Activated CD4-positive, alpha-beta memory T cell treated with anti-CD3 and anti-CD28 coated beads for 36 hours (primary cell): ENCODE measurements at regions of chr2 and their contacts with region 1.

Region 1: GRCh38 chr2:134918526-134919340 is at the start of gene CCNT2:
- DNase-seq: peak; percentile 100
- H3K4me3 Mint-ChIP-seq: peak within 1 kb of the TSS; percentile 90
- H3K27ac Mint-ChIP-seq: peak within 1 kb of the TSS; percentile 97
- H3K4me1 Mint-ChIP-seq: peaks cover 35% of the 10 kb centered on the region
- H3K27me3 Mint-ChIP-seq: peaks cover 5% of the 10 kb centered on the region
- total RNA-seq, gene CCNT2: 25.1 to 25.7 TPM

Region 2: DNA sequence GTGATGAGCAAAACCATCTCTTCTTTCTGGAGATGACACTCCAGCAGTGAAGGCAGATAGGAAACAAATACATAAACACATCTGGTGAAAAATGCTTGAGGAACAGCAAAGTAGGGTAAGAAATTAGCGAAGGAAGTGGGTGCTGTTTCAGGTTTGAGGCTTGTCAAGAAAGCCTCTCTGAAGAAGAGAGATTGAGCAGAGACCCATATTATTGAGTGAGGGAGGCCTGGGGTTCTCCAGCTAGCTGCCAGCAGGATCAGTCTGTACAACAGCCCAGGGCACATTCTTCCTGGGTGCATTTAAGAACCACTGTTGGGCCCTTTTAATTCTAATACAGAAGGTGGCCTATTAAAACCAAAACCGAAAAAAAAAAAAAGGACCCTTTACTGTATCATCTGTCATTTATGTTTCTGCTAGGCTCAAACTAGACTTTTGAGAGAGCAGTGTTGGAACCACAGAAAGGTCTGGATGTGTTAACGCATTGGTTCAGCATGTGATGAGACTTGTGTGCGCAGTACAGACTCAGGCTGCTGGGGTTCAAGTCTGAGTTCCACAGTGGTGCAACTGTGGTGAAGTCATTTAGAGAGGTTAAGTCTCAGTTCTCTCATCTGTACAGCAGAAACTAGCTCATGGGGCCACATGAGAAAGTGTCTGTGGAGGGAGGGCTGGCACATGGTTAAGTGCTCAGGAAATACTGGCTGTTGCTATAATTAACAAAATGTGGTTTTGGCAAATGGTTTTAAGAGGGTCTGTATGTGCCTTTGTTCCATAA is 635.9 kb before region 1 on chr2:
- CTCF ChIA-PET with region 1: no interaction called
- POLR2A ChIA-PET with region 1: no interaction called
- intact Hi-C with region 1: loop called (anchors 10 kb)
- DNase-seq: peak; percentile 73
- H3K4me3 Mint-ChIP-seq: no peak overlapping the region
- H3K27ac Mint-ChIP-seq: peak overlapping the region; percentile 21
- H3K4me1 Mint-ChIP-seq: peaks cover 42% of the 10 kb centered on the region
- H3K27me3 Mint-ChIP-seq: no peaks in the 10 kb centered on the region

Region 3: DNA sequence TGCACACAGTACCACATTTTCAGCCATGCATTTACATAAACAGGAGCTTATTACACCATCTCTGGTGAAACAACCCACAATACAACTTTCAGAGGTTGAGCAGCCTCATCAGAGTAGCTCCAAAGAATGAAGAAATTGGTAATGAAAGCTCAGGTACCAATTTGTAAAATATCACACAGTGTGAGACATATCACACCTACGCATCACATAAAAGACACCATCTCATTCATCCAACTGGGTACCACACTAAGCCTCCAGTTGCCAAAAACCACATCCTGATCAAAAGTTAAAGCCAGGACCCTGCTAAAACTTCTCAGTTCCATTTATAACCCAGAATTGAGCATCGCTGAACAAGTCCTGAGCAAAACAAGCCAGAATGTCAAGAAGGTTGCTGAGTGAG is 204.5 kb before region 1 on chr2:
- CTCF ChIA-PET with region 1: no interaction called
- POLR2A ChIA-PET with region 1: no interaction called
- intact Hi-C with region 1: loop called (anchors 1 kb)
- DNase-seq: no peak
- H3K4me3 Mint-ChIP-seq: no peak overlapping the region
- H3K27ac Mint-ChIP-seq: no peak overlapping the region
- H3K4me1 Mint-ChIP-seq: peaks cover 23% of the 10 kb centered on the region
- H3K27me3 Mint-ChIP-seq: peaks cover 30% of the 10 kb centered on the region

Region 4: DNA sequence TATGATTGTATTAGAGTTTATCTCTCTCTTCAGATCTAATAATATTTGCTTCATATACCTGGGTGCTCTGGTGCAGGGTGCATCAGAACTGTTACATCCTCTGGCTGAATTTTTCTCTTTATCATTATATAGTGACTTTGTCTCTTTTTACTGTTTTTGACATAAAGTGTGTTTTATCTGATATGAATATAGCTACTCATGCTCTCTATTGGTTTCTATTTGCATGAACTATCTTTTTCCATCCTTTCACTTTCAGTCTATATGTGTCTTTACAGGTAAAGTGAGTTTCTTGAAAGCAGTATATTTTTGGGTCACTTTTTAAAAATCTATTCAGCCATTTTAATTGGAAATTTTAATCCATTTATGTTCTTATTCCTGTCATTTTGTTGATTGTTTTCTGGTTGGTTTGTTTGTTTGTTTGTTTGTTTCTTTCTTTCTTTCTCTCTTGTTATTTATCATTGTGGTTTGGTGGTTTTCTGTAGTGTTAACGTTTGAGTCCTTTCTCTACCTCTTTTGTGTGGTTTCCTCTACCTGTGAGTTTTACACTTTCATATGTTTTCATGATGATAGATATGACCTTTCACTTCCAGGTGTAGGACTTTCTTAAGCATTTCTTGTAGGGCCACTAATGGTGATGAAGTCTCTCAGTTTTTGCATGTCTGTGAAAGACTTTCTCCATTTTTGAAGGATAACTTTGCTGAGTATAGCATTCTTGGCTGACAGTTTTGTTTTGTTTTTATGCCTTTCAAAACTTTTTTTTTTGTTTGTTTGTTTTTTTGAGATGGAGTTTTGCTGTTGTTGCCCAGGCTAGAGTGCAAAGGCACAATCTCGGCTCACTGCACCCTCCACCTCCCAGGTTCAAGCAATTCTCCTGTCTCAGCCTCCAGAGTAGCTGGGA is 54.8 kb after region 1 on chr2:
- CTCF ChIA-PET with region 1: no interaction called
- POLR2A ChIA-PET with region 1: no interaction called
- intact Hi-C with region 1: loop called (anchors 1 kb)
- DNase-seq: no peak
- H3K4me3 Mint-ChIP-seq: no peak overlapping the region
- H3K27ac Mint-ChIP-seq: no peak overlapping the region
- H3K4me1 Mint-ChIP-seq: peaks cover 7% of the 10 kb centered on the region
- H3K27me3 Mint-ChIP-seq: no peaks in the 10 kb centered on the region

Region 5: DNA sequence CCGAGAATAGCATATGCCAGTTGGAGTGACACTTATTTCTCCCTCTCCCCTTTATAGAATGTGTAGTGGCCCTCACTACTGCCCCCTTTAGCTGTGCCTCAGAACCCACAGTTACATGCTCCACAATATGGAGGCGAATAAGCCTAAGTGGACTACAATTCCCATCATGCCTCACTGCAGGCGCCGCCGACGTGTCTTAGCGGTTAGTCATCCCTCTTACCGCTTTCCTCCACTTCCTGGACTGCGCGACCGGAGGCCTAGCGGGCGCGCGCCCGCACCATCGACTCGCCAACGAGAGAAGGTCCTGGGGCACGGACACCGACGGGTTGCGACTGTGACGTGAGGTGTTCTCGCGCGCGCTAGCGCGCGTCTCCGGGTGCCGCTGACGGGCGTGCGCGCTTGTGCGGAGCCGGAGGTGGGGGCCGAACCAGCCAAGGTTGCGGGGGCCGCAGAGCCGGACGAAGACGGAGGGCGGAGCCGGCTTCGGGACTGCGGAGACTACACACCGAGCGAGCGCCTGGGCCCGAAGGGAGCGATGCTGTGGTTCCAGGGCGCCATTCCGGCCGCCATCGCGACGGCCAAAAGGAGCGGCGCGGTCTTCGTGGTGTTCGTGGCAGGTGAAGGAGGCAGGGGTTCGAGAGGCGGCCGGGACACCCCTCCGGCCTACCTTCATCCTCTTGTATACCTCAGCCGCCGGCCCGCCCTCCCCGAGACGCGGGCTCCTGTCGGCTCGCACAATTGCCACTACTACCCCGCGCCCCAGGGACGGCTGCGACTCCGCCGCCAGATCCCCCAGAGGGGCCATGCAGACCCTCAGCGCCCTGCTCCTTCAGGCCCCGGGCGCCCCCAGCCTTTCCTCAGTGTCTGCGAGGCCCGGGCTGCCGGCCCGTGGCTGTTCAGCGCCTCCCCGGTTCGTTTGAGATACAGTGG is 822.9 kb after region 1 on chr2 and contains the start of gene UBXN4:
- CTCF ChIA-PET with region 1: no interaction called
- POLR2A ChIA-PET with region 1: no interaction called
- intact Hi-C with region 1: loop called (anchors 1 kb)
- DNase-seq: peak; percentile 98
- H3K4me3 Mint-ChIP-seq: peak within 1 kb of the TSS; percentile 96
- H3K27ac Mint-ChIP-seq: peak within 1 kb of the TSS; percentile 99
- H3K4me1 Mint-ChIP-seq: peaks cover 24% of the 10 kb centered on the region
- H3K27me3 Mint-ChIP-seq: no peaks in the 10 kb centered on the region
- total RNA-seq, gene UBXN4: 107 TPM

Region 6: GRCh38 chr2:135876066-135876711 is 957.5 kb after region 1 on chr2 and contains the start of gene MCM6:
- CTCF ChIA-PET with region 1: no interaction called
- POLR2A ChIA-PET with region 1: no interaction called
- intact Hi-C with region 1: loop called (anchors 1 kb)
- DNase-seq: peak; percentile 100
- H3K4me3 Mint-ChIP-seq: peak within 1 kb of the TSS; percentile 90
- H3K27ac Mint-ChIP-seq: peak within 1 kb of the TSS; percentile 98
- H3K4me1 Mint-ChIP-seq: peaks cover 39% of the 10 kb centered on the region
- H3K27me3 Mint-ChIP-seq: peaks cover 2% of the 10 kb centered on the region
- total RNA-seq, gene MCM6: 280 to 284 TPM